ENCODE measurements at regions of chr21 and their contacts with region 1.

Region 1: GRCh38 chr21:42238185-42238934 is 19.4 kb downstream of the ABCG1 start:
- DNase-seq: no peak
- ATAC-seq: peak; percentile 13
- H3K4me3 Mint-ChIP-seq: peak overlapping the region; percentile 69
- H3K27ac Mint-ChIP-seq: peak overlapping the region; percentile 63
- H3K4me1 Mint-ChIP-seq: peaks cover 50% of the 10 kb centered on the region
- H3K27me3 Mint-ChIP-seq: no peaks in the 10 kb centered on the region

Region 2: GRCh38 chr21:42193131-42193671 is 45.2 kb before region 1 on chr21:
- POLR2A ChIA-PET with region 1: interaction called, 41 read pairs
- DNase-seq: peak; percentile 85
- ATAC-seq: peak; percentile 53
- H3K4me3 Mint-ChIP-seq: peak overlapping the region; percentile 67
- H3K27ac Mint-ChIP-seq: peak overlapping the region; percentile 40
- H3K4me1 Mint-ChIP-seq: peaks cover 62% of the 10 kb centered on the region
- H3K27me3 Mint-ChIP-seq: peaks cover 9% of the 10 kb centered on the region

Region 3: DNA sequence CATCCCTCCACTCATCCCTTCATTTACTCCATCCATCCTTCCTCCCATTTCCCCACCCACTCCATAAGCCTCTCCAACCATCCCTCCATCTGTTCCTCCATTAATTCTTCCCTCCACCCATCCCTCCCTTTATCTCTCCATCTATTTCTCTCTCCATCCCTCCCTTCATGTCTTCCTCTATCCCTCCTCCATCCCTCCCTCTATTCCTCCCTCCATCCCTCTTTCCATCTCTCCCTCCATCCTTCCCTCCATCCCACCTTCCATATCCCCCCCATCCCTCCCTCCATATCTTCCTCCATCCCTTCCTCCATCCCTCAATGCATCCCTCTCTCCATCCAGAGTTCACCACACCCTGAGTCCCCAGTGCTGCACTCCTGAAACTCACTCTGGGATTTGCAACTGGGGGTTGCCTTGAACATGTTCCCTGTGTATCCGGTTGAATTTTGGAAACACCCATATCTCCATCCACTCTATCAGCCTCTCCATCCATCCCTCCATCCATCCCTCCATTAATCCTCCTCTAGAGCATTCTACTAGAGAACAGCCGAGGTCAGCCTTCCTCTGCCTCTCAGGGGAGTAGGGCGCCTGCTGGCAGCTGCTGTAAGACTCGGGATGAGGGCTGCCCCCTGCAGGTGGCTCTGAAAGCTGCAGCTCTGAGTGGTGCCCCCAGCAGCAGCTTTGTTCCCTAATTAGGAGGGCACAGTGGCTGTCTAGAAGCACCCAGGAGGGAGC is 20.0 kb after region 1 on chr21:
- POLR2A ChIA-PET with region 1: interaction called, 15 read pairs
- DNase-seq: peak; percentile 87
- ATAC-seq: peak; percentile 87
- H3K4me3 Mint-ChIP-seq: no peak overlapping the region
- H3K27ac Mint-ChIP-seq: peak overlapping the region; percentile 31
- H3K4me1 Mint-ChIP-seq: peaks cover 19% of the 10 kb centered on the region
- H3K27me3 Mint-ChIP-seq: peaks cover 5% of the 10 kb centered on the region

Region 4: DNA sequence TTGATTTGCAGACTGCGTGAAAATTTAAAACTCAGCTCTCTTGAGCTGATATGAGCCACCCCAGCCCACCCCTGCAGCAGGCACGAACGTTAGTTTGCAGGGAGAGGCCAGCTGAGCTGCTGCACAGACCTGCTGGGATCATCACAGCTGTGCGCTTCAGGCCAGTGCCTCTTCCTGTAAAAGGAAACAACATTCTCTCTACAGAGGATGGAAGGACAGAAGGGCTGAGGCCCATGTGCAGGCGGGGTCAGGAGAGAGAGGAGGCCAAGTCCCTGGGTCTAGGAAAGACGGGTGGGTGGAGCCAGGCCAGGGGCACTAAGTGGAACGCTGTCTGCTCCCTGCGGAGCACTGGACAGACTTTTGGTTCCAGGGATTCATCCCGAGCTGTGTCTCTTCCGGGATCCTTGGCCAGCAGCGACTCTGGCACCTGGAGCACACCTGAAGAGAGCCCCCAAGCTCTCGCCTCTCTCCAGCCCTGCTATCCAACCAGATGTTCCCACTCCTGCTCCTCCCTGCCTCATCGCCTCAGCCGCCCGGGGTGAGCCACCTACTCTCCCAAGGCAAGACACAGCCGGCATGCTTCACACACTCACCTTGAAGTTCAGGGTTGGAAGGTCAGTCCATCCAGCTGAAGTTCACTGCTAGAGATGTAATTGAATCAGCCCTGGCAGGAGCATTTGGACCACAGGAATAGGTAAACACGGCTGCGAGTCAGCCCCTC is 215.3 kb after region 1 on chr21:
- POLR2A ChIA-PET with region 1: no interaction called
- DNase-seq: no peak
- ATAC-seq: no peak
- H3K4me3 Mint-ChIP-seq: no peak overlapping the region
- H3K27ac Mint-ChIP-seq: no peak overlapping the region
- H3K4me1 Mint-ChIP-seq: peaks cover 32% of the 10 kb centered on the region
- H3K27me3 Mint-ChIP-seq: no peaks in the 10 kb centered on the region

Measured in activated naive CD8-positive, alpha-beta T cell treated with anti-CD3 and anti-CD28 coated beads, Interleukin-2, amount 10 ng/mL, durations not matched to agents 7 days and 5 days (primary cell).